ENCODE measurements at regions of chr6 and their contacts with region 1.

Region 1: GRCh38 chr6:150068720-150069648 is at the start of gene ULBP3:
- DNase-seq: peak; percentile 26 to 82 (median 62)
- ATAC-seq: peak; percentile 78
- H3K4me3 ChIP-seq: peak within 1 kb of the TSS; percentile 83 to 85
- H3K4me3 Mint-ChIP-seq: peak within 1 kb of the TSS; percentile 83
- H3K27ac ChIP-seq: no peak within 1 kb of the TSS
- H3K27ac Mint-ChIP-seq: no peak within 1 kb of the TSS
- H3K4me1 ChIP-seq: peaks cover 6% of the 10 kb centered on the region
- H3K4me1 Mint-ChIP-seq: peaks cover 14% of the 10 kb centered on the region
- H3K27me3 ChIP-seq: peaks cover 0 to 3% of the 10 kb centered on the region in 2 experiments
- H3K27me3 Mint-ChIP-seq: peaks cover 7% of the 10 kb centered on the region
- CTCF ChIP-seq: no peak
- total RNA-seq, gene ULBP3: 1.5 to 1.8 TPM

Region 2: GRCh38 chr6:150334790-150335783 is 266.1 kb after region 1 on chr6:
- CTCF ChIA-PET with region 1: interaction called, 4 read pairs
- POLR2A ChIA-PET with region 1: no interaction called
- intact Hi-C with region 1: loop called in 1 of 2 experiments (anchors 1 kb)
- DNase-seq: peak in 3 of 9 experiments; percentile 30 to 69 (median 62)
- ATAC-seq: no peak
- H3K4me3 ChIP-seq: no peak overlapping the region
- H3K4me3 Mint-ChIP-seq: no peak overlapping the region
- H3K27ac ChIP-seq: no peak overlapping the region
- H3K27ac Mint-ChIP-seq: no peak overlapping the region
- H3K4me1 ChIP-seq: no peaks in the 10 kb centered on the region
- H3K4me1 Mint-ChIP-seq: no peaks in the 10 kb centered on the region
- H3K27me3 ChIP-seq: no peaks in the 10 kb centered on the region
- H3K27me3 Mint-ChIP-seq: peaks cover 6% of the 10 kb centered on the region
- CTCF ChIP-seq: peak; percentile 59